AG04450 (cell line): ENCODE measurements at regions of chr3 and their contacts with region 1.

Region 1: GRCh38 chr3:11558002-11558401 is 85.7 kb downstream of the VGLL4 start:
- DNase-seq: no peak
- H3K4me3 ChIP-seq: no peak overlapping the region
- H3K27ac ChIP-seq: peak overlapping the region; percentile 78
- H3K27me3 ChIP-seq: no peaks in the 10 kb centered on the region
- CTCF ChIP-seq: no peak

Region 2: GRCh38 chr3:11509173-11510000 is 48.6 kb before region 1 on chr3:
- CTCF ChIA-PET with region 1: no interaction called
- POLR2A ChIA-PET with region 1: interaction called, 14 read pairs
- DNase-seq: peak; percentile 93
- H3K4me3 ChIP-seq: no peak overlapping the region
- H3K27ac ChIP-seq: peak overlapping the region; percentile 87
- H3K27me3 ChIP-seq: no peaks in the 10 kb centered on the region
- CTCF ChIP-seq: peak; percentile 40

Region 3: GRCh38 chr3:11568503-11569155 is 10.6 kb after region 1 on chr3:
- CTCF ChIA-PET with region 1: no interaction called
- POLR2A ChIA-PET with region 1: interaction called, 11 read pairs
- DNase-seq: peak; percentile 75
- H3K4me3 ChIP-seq: peak overlapping the region; percentile 58
- H3K27ac ChIP-seq: peak overlapping the region; percentile 100
- H3K27me3 ChIP-seq: no peaks in the 10 kb centered on the region
- CTCF ChIP-seq: no peak

Region 4: GRCh38 chr3:11651900-11652299 is 93.9 kb after region 1 on chr3:
- CTCF ChIA-PET with region 1: interaction called, 10 read pairs
- POLR2A ChIA-PET with region 1: interaction called, 4 read pairs
- DNase-seq: no peak
- H3K4me3 ChIP-seq: no peak overlapping the region
- H3K27ac ChIP-seq: no peak overlapping the region
- H3K27me3 ChIP-seq: no peaks in the 10 kb centered on the region
- CTCF ChIP-seq: peak; percentile 46